ENCODE measurements at regions of chr3 and their contacts with region 1.

Region 1: DNA sequence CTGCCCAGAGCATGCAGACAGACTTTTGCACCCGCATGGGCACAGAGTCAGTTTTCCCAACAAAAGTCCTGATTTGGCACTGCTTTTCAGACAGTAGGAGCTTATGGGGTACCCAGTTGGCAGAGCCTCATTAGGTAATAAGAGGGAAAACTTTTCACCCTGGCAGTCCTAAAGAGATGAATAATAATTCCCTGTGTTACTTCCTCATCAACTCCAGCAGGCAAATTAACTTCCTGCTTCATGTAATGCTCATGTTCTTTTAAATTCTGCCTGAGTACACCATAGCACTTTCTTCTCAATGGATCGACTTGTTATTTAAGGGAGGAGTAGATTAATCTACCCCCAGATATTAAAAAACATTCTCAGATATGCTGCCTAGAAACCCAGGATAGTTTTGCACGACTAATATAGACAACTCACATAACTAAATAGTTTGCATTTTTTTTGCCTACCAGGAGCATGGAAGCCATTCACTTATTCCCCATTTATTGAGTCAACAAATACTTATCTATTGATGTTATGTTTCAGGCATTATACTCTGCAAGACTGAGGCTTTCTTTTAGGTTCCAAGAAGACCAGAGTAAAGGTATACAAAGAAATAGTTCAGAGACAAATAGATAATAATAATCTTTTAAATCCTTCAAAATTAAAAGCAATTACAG is 214.5 kb downstream of the KCNMB2 start:
- DNase-seq: no peak
- ATAC-seq: no peak
- H3K4me3 ChIP-seq: no peak overlapping the region
- H3K27ac ChIP-seq: no peak overlapping the region
- H3K4me1 ChIP-seq: peaks cover 0 to 2% of the 10 kb centered on the region in 2 donors
- H3K27me3 ChIP-seq: no peaks in the 10 kb centered on the region

Region 2: DNA sequence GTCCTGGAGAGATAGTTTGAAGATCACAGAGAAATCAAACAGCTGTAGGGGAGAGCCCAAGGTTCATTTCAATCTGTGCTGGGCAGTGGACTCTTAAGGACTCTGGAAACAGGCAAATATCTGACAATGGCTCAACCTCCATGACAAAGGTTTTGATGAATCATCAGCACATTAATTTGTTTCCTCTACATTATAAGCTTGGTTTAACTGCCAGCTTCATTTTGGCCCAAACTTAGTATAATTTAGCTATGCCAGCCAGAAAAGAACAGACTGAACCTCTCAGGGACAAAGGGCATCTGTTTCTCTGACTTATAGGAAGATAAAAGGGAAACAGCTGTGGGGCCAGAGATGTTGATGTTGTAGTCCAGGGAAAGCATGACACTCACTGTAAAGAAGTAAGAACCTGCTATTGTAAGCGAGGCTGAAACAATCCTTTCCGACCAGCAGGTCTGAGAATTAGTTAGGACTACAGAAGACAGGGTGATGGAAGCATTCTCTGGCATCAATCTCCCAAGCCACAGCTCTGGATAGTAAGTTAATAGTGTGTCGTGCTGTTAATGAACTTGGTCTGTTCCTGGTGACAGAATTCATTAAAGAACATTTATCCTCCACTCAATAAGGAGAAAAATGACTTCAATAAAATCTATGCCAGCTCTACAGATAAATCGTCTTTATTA is 104.4 kb before region 1 on chr3:
- intact Hi-C with region 1: no loop called
- DNase-seq: no peak
- ATAC-seq: no peak
- H3K4me3 ChIP-seq: no peak overlapping the region
- H3K27ac ChIP-seq: no peak overlapping the region
- H3K4me1 ChIP-seq: no peaks in the 10 kb centered on the region
- H3K27me3 ChIP-seq: no peaks in the 10 kb centered on the region

Region 3: DNA sequence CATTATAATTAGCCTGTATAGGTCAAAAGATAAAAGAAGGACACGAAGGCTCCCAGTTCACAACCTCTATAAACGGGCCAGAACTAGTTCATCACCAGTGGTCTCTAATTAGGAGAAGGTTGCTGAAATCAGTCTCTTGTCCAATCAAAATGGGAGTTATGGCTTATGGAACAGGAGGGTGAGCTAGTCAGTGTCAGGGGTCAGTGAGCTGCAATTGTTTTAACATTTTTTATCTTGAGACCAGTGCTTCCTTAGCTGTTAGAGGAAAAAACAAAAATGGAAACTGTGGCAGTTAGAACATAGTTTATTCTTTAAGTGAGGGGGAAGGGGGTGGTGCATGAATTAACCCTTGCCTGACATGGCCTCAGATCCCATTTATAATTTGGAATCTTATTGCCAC is 72.8 kb before region 1 on chr3:
- intact Hi-C with region 1: loop called in 1 of 2 experiments (anchors 2 kb)
- DNase-seq: no peak
- ATAC-seq: no peak
- H3K4me3 ChIP-seq: no peak overlapping the region
- H3K27ac ChIP-seq: no peak overlapping the region
- H3K4me1 ChIP-seq: no peaks in the 10 kb centered on the region
- H3K27me3 ChIP-seq: no peaks in the 10 kb centered on the region

Measured in aorta (tissue), 5 donors.